ENCODE measurements at regions of chr12 and their contacts with region 1.

Region 1: DNA sequence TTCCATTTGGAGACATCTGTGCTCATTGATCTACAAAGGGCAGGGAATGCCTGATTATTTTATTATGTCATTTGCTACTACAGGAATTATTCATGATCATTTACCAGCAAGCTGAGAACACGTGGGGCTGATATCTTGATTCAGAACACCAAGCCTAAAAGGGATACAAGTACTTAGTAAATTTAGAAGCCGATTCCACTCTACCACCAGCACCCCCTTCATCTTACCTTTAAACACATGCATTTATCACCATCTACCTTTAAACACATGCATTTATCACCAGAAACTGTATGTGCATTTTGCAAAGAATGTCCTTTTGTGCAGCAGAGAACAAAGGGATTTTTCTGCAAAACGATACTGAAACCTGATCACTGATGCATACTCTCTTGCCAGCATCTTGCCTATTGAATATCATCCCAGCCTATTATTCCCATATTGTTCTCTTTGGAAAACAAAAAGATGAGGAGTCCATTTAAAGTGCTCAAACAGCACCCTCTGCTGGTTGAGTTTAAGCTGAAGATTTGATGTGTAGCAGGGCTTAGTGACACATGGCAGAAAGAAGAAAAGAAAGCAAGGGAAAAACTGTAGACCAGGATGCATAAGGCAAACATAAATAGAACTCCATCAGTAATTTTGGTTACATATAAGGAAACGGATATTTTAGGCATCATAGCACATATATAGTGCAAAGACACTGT is 132.6 kb upstream of the PLEKHG7 start:
- ATAC-seq: peak; percentile 81 to 98 (median 94)
- H3K4me3 ChIP-seq: peak overlapping the region; percentile 20 to 42 (median 33)
- H3K27ac ChIP-seq: peak overlapping the region; percentile 57 to 58
- H3K4me1 ChIP-seq: peaks cover 2 to 6% of the 10 kb centered on the region in 2 donors

Region 2: DNA sequence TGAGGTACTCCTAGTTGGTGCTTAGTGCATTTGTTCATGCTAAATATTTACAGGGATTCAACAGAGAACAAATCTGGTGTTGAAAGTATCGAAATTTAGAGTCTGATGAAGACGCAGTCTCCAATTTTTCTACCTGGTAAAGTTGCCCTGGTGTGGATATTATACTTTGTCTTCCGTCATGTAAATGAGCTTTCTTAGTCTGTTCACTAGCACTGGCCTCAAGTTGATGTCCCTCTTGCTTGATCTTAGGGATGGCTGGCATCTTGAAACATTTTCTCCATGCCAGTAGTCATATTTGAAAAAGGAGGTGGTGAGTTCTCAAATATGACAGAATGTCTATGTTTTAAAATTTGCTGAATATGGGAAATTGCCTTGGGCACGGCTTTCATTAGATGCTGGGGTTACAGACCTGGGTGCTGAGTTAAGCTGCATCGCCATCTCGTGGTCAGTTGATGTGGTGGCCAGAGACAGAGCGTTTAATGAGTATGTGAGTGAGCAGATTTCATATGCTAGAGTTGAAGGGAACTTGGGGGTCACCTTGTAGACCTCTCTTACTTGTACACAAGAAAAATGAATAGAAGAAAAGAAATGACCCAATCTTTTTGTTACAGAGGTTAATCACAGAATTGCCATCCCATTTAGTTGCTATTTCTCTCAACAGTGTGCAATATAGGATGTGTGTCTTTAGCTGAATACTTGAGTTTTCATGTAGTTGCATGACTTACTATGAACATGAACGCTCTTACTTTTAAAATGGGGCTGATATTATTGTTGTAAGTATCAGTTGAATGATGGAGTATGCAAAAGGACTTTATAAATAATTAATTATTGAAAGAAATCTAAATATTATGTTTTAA is 1214.8 kb before region 1 on chr12:
- in situ Hi-C with region 1: loop called in 1 of 9 experiments (anchors 25 kb)
- ATAC-seq: peak; percentile 79 to 100 (median 94)
- H3K4me3 ChIP-seq: no peak overlapping the region
- H3K27ac ChIP-seq: no peak overlapping the region
- H3K4me1 ChIP-seq: peaks cover 7 to 11% of the 10 kb centered on the region in 2 donors

Region 3: GRCh38 chr12:91382081-91382543 is 1188.1 kb before region 1 on chr12:
- in situ Hi-C with region 1: loop called in 6 of 9 experiments (anchors 25 kb)
- ATAC-seq: peak; percentile 40 to 70 (median 58)
- H3K4me3 ChIP-seq: peak overlapping the region; percentile 30 to 52 (median 39)
- H3K27ac ChIP-seq: peak overlapping the region; percentile 60 to 78
- H3K4me1 ChIP-seq: peaks cover 29 to 42% of the 10 kb centered on the region in 2 donors

Region 4: GRCh38 chr12:91811481-91812287 is 758.5 kb before region 1 on chr12:
- in situ Hi-C with region 1: loop called in 1 of 9 experiments (anchors 25 kb)
- ATAC-seq: peak in 7 of 8 experiments; percentile 40 to 65 (median 47)
- H3K4me3 ChIP-seq: no peak overlapping the region
- H3K27ac ChIP-seq: no peak overlapping the region
- H3K4me1 ChIP-seq: no peaks in the 10 kb centered on the region

Region 5: DNA sequence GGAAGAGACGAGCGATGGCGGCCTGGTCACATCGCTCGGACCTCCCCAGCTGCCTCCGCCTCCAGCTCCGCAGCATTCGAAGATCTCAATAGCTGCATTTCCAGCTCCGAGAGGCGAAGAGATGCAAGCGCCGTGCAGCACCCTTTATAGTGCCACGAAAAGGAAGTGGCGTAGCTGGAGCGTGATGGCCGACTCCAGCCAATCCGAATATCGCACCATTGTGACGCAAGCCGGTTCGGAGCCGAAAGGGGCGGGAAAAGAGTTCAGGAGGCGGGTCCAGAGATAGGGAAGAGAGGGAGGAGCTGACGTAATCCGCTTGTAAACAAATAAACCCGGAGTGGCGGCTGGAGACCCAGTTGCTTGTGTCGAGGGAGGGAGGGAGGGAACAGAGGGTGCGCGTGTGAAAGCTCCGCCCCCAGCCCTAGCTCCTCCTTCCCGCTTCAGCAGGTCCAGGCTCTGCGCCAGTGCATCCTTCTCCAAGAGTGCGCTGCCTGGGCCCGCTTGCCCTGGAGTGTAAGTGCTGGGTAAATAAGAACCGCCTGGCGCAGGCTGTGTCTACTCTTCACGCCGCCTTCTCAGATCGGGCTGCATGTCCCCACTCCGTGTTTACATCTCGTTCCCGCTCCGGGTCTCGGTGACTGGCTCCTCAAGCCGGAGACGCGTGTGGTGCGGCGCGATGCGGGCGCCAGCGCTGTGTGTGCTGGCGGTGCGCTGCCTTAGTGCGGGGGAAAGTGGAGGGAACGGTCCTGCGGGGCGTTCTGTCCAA is 424.3 kb before region 1 on chr12 and contains the start of gene BTG1:
- in situ Hi-C with region 1: loop called in 3 of 9 experiments (anchors 25 kb)
- ATAC-seq: peak; percentile 76 to 86 (median 82)
- H3K4me3 ChIP-seq: peak within 1 kb of the TSS; percentile 57 to 83 (median 79)
- H3K27ac ChIP-seq: peak within 1 kb of the TSS; percentile 86 to 90
- H3K4me1 ChIP-seq: peaks cover 0 to 5% of the 10 kb centered on the region in 2 donors
- total RNA-seq, gene BTG1: 33.1 to 161 (median 68.2) TPM

Region 6: GRCh38 chr12:92158796-92159439 is 411.3 kb before region 1 on chr12:
- in situ Hi-C with region 1: loop called in 2 of 9 experiments (anchors 25 kb)
- ATAC-seq: no peak
- H3K4me3 ChIP-seq: no peak overlapping the region
- H3K27ac ChIP-seq: no peak overlapping the region
- H3K4me1 ChIP-seq: no peaks in the 10 kb centered on the region

Measured in motor neuron (in vitro differentiated cells).